ENCODE measurements at regions of chr3 and their contacts with region 1.

Region 1: DNA sequence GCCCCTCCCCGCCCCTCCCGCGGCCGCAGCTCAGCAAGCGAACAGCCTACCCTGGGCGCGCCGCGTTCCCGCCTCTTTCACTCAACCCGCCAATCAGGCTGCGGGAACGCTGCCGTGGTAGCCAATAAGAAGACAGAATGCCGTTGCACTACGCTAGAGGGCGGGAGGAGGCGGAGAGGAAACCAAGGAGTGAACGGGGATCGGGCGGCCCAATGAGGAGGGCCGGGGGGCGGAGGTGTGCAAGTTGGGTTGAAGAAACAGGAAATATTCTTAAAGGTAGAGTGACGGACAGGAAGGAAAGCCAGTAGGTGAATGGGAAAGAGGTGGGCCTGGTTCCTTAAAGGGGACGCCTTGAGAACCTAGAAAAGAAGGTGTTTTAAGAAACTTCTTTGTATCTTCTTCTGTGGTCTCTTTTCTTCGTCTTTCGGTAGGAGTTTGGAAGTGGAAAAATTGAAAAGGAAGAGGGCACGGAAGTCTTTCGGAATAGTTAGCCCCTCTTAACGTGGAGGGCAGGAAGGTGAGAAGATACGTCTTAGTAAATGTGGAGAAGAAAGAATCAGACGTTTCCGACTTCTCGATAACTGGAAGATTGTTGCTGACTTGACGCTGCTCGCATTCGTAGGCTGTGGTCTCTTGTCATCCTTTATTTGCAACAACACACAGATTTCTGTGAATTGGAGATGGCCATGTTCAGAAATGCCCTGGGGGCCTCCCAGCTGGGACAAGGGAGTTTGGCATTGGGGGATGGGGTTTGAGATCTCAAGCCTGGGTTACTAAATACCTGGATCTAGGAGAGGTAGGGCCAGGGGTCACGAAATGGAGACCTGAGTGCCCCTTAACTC is 437 bp upstream of the USF3 start:
- DNase-seq: peak; percentile 99
- ATAC-seq: peak; percentile 86 to 95 (median 87)
- H3K4me3 ChIP-seq: peak overlapping the region; percentile 83
- H3K4me3 Mint-ChIP-seq: no peak overlapping the region
- H3K27ac ChIP-seq: peak overlapping the region; percentile 90
- H3K27ac Mint-ChIP-seq: no peak overlapping the region
- H3K4me1 ChIP-seq: peaks cover 9% of the 10 kb centered on the region
- H3K4me1 Mint-ChIP-seq: peaks cover 20 to 21% of the 10 kb centered on the region in 2 donors
- H3K27me3 ChIP-seq: no peaks in the 10 kb centered on the region
- H3K27me3 Mint-ChIP-seq: no peaks in the 10 kb centered on the region
- CTCF ChIP-seq: no peak

Region 2: DNA sequence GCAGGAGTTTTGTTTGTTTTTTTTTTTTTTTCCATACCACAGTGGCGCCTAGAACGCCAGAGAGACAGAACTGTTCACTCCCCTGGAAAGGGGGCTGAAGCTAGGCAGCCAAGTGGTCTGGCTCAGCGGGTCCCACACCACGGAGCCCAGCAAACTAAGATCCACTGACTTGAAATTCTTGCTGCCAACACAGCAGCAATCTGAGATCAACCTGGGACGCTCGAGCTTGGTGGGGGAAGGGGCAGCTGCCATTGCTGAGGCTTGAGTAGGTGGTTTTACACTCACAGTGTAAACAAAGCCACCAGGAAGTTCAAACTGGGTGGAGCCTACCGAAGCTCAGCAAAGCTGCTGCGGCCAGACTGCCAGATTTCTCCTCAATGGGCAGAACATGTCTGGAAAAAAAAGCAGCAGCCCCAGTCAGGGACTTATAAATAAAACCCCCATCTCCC is 211.7 kb before region 1 on chr3:
- intact Hi-C with region 1: loop called (anchors 5 kb)
- DNase-seq: peak; percentile 64 to 69
- ATAC-seq: peak; percentile 82 to 88 (median 88)
- H3K4me3 ChIP-seq: peak overlapping the region; percentile 19
- H3K4me3 Mint-ChIP-seq: peak overlapping the region; percentile 81
- H3K27ac ChIP-seq: peak overlapping the region; percentile 72
- H3K27ac Mint-ChIP-seq: peak overlapping the region; percentile 84 to 95
- H3K4me1 ChIP-seq: peaks cover 12% of the 10 kb centered on the region
- H3K4me1 Mint-ChIP-seq: peaks cover 41 to 48% of the 10 kb centered on the region in 2 donors
- H3K27me3 ChIP-seq: no peaks in the 10 kb centered on the region
- H3K27me3 Mint-ChIP-seq: no peaks in the 10 kb centered on the region
- CTCF ChIP-seq: no peak

Region 3: GRCh38 chr3:113514265-113514769 is 182.6 kb before region 1 on chr3:
- intact Hi-C with region 1: loop called (anchors 10 kb)
- DNase-seq: no peak
- ATAC-seq: no peak
- H3K4me3 ChIP-seq: peak overlapping the region; percentile 90
- H3K4me3 Mint-ChIP-seq: no peak overlapping the region
- H3K27ac ChIP-seq: peak overlapping the region; percentile 80
- H3K27ac Mint-ChIP-seq: no peak overlapping the region
- H3K4me1 ChIP-seq: peaks cover 11% of the 10 kb centered on the region
- H3K4me1 Mint-ChIP-seq: peaks cover 6 to 8% of the 10 kb centered on the region in 2 donors
- H3K27me3 ChIP-seq: no peaks in the 10 kb centered on the region
- H3K27me3 Mint-ChIP-seq: peaks cover 19 to 27% of the 10 kb centered on the region in 2 donors
- CTCF ChIP-seq: no peak